ENCODE measurements at regions of chrX and their contacts with region 1.

Region 1: GRCh38 chrX:153782313-153782712 is 1.5 kb downstream of the SRPK3 start:
- DNase-seq: no peak
- H3K4me3 ChIP-seq: no peak overlapping the region
- H3K27ac ChIP-seq: no peak overlapping the region
- H3K4me1 ChIP-seq: no peaks in the 10 kb centered on the region
- H3K27me3 ChIP-seq: no peaks in the 10 kb centered on the region
- CTCF ChIP-seq: peak in 2 of 3 experiments; percentile 43 to 64; a peak in 3 of 4 replicates
- EP300 ChIP-seq: no peak
- POLR2A ChIP-seq: no peak
- RAD21 ChIP-seq: peak; percentile 55 to 61

Region 2: DNA sequence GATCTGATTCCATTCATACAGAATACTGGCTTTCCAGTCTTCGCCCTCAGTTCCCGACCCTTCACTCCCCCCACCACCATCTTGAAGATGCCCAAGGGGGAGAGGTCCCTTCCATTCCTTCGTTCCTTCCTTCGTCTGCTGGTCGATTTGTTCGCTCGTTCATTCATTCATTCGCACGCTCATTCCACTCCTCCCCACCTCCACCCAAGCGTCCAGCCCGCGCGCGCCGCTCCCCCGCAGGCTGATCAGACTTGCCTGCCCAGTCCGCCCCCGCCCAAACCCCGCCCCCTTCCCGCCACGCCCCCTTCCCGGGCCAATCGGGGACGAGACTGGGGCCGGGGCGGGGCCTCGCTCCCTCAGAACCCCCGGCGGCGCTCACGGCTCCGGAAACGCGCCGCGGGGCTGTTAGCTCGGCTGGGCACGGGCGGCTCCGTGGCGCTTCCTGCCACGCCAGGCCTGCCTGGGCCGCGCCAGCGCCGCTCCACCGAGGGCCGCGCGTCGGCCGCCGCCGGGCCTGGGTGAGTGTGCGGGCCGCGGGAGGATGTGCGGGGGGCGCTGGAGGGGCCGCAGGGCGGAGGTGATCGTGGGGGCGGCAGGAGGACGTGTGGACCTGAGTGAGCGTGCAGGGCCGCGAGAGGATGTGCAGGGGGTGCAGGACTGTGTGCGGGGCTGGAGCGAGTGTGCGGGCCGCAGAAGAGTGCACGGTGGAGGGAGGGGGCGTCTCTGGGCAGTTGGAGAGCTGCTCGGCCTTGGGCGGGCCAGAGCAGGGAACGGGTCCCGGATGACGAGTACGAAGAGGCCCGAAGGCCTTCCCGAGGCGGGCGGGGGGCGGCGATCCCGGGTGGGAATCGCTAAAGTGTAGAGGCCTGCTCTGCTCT is 448.3 kb before region 1 on chrX and contains the start of gene ZNF275:
- CTCF ChIA-PET with region 1: no interaction called
- POLR2A ChIA-PET with region 1: no interaction called
- DNase-seq: peak in 1 of 2 experiments; percentile 82
- H3K4me3 ChIP-seq: peak within 1 kb of the TSS; percentile 55 to 98 (median 72)
- H3K27ac ChIP-seq: peak within 1 kb of the TSS; percentile 52; the same call in 1 of the 2 replicates
- H3K4me1 ChIP-seq: peaks cover 0 to 6% (median 0%) of the 10 kb centered on the region in 4 experiments; a peak in 1 of 7 replicates
- H3K27me3 ChIP-seq: no peaks in the 10 kb centered on the region
- CTCF ChIP-seq: no peak
- EP300 ChIP-seq: no peak
- POLR2A ChIP-seq: no peak
- RAD21 ChIP-seq: no peak
- total RNA-seq, gene ZNF275: 8.1 and 8.2 TPM in 2 replicates

Region 3: DNA sequence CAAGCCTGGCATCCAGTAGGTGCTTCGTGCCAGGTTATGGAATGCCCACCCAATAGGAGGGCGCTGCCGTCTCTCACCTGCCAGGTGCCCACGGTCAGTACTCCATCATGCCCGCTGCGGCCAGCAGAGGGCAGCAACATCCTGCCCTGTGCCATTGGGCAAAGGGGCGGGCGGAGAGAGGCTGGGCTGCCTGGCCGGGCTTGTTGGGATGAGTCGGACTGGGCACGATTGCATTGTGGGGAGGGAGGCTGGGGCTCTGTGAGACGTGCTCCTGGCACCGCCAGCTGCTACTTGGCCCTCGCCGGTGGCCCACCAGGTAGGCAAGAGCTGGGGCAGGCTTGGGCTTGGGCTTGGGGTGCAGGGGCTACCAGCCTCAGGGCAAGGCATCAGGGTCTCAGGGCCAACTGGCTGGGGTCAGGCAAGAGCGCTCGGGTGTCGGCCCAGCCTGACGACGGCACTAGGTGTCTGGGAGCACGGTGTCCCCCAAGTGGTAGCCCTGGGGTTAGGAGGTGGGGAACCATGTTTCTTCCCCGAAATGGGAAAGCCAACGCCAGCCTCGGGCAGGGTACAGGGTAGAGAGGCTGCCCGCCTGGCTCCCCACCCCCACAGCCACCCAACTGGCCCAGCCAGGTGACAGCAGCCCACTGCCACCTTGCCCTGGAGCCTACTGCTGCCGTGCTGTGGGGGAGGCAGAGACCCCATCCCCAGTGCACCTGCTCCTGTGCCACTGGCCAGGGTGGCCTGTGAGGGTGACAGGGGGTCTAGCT is 18.1 kb before region 1 on chrX and contains the start of gene PLXNB3:
- CTCF ChIA-PET with region 1: interaction called, 10 read pairs
- POLR2A ChIA-PET with region 1: interaction called, 13 read pairs
- DNase-seq: peak; percentile 50 to 87
- H3K4me3 ChIP-seq: no peak within 1 kb of the TSS
- H3K27ac ChIP-seq: no peak within 1 kb of the TSS
- H3K4me1 ChIP-seq: peaks cover 0 to 8% (median 4%) of the 10 kb centered on the region in 4 experiments; a peak in 5 of 7 replicates
- H3K27me3 ChIP-seq: no peaks in the 10 kb centered on the region
- CTCF ChIP-seq: peak in 2 of 3 experiments; percentile 84 to 86; a peak in 3 of 4 replicates
- EP300 ChIP-seq: no peak
- POLR2A ChIP-seq: no peak
- RAD21 ChIP-seq: peak; percentile 90 to 92
- total RNA-seq, gene PLXNB3: 2.7 TPM in 2 replicates

Region 4: GRCh38 chrX:153794018-153794896 is 11.9 kb after region 1 on chrX and contains the starts of genes IDH3G and SSR4:
- CTCF ChIA-PET with region 1: interaction called, 14 read pairs
- POLR2A ChIA-PET with region 1: interaction called, 10 read pairs
- DNase-seq: peak; percentile 81 to 91
- H3K4me3 ChIP-seq: peak within 1 kb of the TSS; percentile 77 to 92 (median 83)
- H3K27ac ChIP-seq: peak within 1 kb of the TSS; percentile 96; the same call in 1 of the 2 replicates
- H3K4me1 ChIP-seq: peaks cover 0 to 17% (median 6%) of the 10 kb centered on the region in 4 experiments; a peak in 4 of 7 replicates
- H3K27me3 ChIP-seq: no peaks in the 10 kb centered on the region
- CTCF ChIP-seq: peak in 1 of 3 experiments; percentile 26; a peak in 1 of 4 replicates
- EP300 ChIP-seq: no peak
- POLR2A ChIP-seq: peak in 1 of 2 experiments; percentile 57; a peak in 2 of 3 replicates
- RAD21 ChIP-seq: no peak
- total RNA-seq, gene IDH3G: 36.1 and 39.4 TPM in 2 replicates
- total RNA-seq, gene SSR4: 161 and 168 TPM in 2 replicates